ENCODE measurements at regions of chr14 and their contacts with region 1.

Region 1: GRCh38 chr14:71133296-71133695 is 226.0 kb downstream of the PCNX1 start:
- DNase-seq: no peak
- H3K27ac ChIP-seq: no peak overlapping the region
- CTCF ChIP-seq: no peak

Region 2: DNA sequence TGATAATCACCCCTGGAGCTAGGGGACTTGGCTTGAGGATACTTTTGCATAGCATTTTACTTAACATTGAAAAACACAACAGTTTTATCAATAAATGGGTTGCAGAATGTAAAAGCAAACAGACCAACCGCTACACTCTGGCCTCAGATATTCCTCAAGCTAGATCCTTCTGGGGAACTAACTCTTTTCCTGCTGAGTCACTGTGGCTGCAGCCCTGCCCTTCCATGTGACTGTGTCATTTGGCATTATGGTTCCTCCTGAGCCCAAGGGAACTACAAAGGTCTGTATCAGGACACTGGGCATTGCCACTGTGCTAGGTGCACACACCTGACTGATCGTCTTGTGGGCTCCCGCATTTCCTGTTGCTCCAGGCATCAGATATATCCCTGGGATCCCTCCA is 435.0 kb before region 1 on chr14:
- CTCF ChIA-PET with region 1: no interaction called
- POLR2A ChIA-PET with region 1: no interaction called
- DNase-seq: peak; percentile 59
- H3K27ac ChIP-seq: peak overlapping the region; percentile 47
- CTCF ChIP-seq: no peak

Region 3: DNA sequence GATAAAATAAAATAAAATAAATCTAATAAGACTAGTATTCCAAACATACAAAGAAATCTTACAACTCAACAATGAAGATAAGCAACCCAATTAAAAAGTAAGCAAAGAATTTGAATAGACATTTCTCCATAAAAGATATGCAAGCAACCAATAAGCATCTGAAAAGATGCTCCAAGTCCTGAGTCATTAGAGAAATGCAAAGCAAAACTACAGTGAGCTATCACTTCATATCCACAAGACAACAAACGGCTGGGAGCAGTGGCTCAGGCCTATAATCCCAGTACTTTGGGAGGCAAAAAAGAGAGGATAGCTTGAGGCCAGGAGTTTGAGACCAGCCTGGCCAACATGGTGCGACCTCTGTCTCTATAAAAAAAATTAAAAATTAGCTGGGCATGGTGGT is 1866.8 kb after region 1 on chr14:
- CTCF ChIA-PET with region 1: no interaction called
- POLR2A ChIA-PET with region 1: interaction called, 11 read pairs
- DNase-seq: no peak
- H3K27ac ChIP-seq: no peak overlapping the region
- CTCF ChIP-seq: no peak

Measured in RWPE1 (cell line).